Activated T-helper 1 cell treated with anti-CD3 and anti-CD28 coated beads, Interleukin-12 subunit alpha, Interleukin-12 subunit beta, Interleukin-2, Interleukin-4 antibody, amounts not matched to agents 30 ng/mL and 10 ng/mL and 1 ng/mL, durations not matched to agents 14 hours and 24 hours and 36 hours (primary cell): ENCODE measurements at regions of chr2 and their contacts with region 1.

Region 1: DNA sequence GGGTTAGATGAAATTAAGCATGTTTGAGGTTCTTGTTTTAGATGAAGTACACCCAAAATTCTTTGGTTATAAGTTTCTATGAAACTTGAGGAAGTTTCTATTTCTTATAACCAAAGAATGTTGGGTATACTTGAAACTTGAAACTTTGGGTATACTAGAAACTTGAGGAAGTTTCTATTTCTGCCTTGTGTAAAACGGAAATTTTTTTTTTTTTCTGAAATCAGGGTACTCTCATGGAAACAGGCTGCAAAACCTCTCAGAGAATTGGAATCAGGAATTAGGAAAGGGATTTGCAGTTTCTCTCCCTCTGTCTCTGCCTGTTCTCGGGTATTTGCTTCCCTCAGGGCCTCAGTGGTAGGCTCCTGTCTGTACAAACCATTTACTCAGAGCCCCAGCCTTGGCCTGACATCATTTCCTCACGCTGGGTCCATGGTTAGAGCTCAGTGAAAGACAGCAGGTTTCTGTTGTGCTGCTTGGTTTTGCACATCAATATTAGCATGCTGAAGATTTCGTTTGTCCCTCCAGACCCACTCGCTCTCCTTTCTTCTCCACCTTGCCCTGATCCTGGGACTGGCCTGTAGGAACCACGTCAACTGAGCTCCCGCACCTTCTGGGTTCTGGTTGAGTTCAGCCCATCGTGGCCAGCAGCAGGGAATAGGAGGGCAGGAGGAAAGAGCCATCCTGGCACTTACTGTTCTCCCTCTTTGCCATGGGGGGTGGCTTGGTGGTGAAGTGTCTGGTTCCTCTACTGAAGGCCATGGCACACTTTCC is 106.4 kb downstream of the POLR1A start:
- DNase-seq: peak; percentile 50
- H3K4me3 Mint-ChIP-seq: peak overlapping the region; percentile 50
- H3K27ac Mint-ChIP-seq: peak overlapping the region; percentile 84
- H3K4me1 Mint-ChIP-seq: peaks cover 74% of the 10 kb centered on the region
- H3K27me3 Mint-ChIP-seq: peaks cover 2% of the 10 kb centered on the region

Region 2: GRCh38 chr2:85852937-85853498 is 146.2 kb before region 1 on chr2:
- intact Hi-C with region 1: loop called (anchors 1 kb)
- DNase-seq: peak; percentile 46
- H3K4me3 Mint-ChIP-seq: peak overlapping the region; percentile 82
- H3K27ac Mint-ChIP-seq: peak overlapping the region; percentile 99
- H3K4me1 Mint-ChIP-seq: peaks cover 58% of the 10 kb centered on the region
- H3K27me3 Mint-ChIP-seq: no peaks in the 10 kb centered on the region

Region 3: DNA sequence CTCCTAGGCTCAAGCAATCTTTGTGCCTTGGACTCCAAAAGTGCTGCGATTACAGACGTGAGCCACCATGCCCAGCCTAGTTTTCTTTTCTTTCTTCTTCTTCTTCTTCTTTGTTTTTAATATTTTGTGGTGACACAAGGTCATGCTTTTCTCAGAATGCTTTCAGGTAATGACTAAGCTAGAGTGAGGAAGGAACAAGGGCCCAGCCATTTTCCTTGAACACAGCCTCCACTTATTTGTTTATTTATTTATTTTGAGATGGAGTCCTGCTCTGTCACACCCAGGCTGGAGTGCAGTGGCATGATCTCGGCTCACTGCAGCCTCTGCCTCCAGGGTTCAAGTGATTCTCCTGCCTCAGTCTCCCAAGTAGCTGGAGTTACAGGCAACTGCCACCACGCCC is 36.2 kb before region 1 on chr2:
- intact Hi-C with region 1: loop called (anchors 2 kb)
- DNase-seq: no peak
- H3K4me3 Mint-ChIP-seq: peak overlapping the region; percentile 1
- H3K27ac Mint-ChIP-seq: no peak overlapping the region
- H3K4me1 Mint-ChIP-seq: peaks cover 26% of the 10 kb centered on the region
- H3K27me3 Mint-ChIP-seq: peaks cover 3% of the 10 kb centered on the region